HEK293 (cell line): ENCODE measurements at regions of chr1 and their contacts with region 1.

Region 1: DNA sequence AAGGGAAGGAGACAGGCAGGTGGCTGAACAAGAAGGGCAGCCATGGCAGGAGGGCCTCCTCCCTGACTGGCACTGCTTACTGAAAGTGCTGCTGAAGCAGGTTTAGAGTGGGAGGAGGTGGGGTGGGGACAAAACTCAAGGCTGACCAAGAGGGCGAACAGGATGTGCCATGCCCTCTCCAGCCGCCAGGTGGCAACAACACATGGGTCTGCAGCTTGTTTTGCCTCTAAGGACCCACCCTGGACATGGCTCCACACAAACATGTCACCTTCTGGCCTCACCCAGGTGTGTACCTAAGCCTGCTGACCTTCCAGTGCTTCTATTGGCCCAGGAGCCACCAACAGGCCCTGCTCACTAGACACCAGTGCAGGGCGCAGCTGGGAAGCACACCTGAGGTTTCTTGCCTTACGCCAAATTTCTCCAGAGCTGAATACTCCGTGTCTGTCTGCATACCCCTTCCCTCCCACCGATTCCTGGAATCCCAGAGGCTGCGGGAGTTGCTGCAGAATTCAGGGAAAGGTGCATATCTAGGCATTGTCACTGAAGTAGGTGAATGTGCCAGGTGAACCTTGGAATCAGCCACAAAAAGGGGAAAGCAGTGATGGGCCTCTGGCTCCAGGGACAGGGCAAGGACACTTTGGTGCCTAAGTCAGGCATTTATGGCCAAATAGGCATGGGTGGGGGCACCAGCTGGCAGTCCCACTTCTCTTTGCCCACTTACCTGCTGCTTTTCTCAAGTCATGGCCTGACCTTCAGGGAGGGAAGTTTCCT is 5.3 kb downstream of the PSRC1 start:
- H3K4me3 ChIP-seq: no peak overlapping the region
- H3K27ac ChIP-seq: no peak overlapping the region
- H3K4me1 ChIP-seq: peaks cover 10% of the 10 kb centered on the region
- CTCF ChIP-seq: peak; percentile 89

Region 2: DNA sequence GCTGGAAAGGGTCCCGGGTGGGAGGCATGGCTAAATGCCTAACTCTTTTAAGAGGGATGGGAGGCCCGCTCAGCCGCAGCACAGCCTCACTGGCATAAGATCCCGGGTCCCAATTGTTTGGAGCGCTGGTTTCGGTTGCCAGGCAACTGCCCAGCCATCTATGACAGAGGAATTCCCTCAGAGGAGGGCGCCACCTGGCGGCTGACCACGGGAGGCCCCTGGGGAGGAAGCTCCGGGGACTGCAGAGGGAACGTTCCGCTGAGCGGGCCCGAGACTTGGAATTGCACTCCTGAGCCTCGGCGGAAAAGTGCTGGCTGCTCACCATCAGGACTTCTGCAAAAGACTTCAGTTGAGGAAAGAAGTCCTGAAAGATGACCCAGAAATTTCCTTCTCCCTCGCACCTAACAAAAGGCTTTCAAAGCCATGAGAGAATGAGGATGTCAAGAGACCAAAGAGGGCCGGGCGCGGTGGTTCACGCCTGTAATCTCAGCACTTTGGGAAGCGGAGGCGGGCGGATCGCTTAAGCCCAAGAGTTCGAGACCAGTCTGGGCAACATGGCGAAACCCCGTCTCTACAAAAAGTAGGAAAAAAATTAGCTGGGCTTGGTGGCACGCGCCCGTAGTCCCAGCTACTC is 164.8 kb before region 1 on chr1:
- CTCF ChIA-PET with region 1: no interaction called
- POLR2A ChIA-PET with region 1: no interaction called
- H3K4me3 ChIP-seq: no peak overlapping the region
- H3K27ac ChIP-seq: no peak overlapping the region
- H3K4me1 ChIP-seq: no peaks in the 10 kb centered on the region
- CTCF ChIP-seq: peak; percentile 79

Region 3: GRCh38 chr1:109151164-109151990 is 126.2 kb before region 1 on chr1:
- CTCF ChIA-PET with region 1: no interaction called
- POLR2A ChIA-PET with region 1: no interaction called
- H3K4me3 ChIP-seq: no peak overlapping the region
- H3K27ac ChIP-seq: no peak overlapping the region
- H3K4me1 ChIP-seq: no peaks in the 10 kb centered on the region
- CTCF ChIP-seq: no peak

Region 4: DNA sequence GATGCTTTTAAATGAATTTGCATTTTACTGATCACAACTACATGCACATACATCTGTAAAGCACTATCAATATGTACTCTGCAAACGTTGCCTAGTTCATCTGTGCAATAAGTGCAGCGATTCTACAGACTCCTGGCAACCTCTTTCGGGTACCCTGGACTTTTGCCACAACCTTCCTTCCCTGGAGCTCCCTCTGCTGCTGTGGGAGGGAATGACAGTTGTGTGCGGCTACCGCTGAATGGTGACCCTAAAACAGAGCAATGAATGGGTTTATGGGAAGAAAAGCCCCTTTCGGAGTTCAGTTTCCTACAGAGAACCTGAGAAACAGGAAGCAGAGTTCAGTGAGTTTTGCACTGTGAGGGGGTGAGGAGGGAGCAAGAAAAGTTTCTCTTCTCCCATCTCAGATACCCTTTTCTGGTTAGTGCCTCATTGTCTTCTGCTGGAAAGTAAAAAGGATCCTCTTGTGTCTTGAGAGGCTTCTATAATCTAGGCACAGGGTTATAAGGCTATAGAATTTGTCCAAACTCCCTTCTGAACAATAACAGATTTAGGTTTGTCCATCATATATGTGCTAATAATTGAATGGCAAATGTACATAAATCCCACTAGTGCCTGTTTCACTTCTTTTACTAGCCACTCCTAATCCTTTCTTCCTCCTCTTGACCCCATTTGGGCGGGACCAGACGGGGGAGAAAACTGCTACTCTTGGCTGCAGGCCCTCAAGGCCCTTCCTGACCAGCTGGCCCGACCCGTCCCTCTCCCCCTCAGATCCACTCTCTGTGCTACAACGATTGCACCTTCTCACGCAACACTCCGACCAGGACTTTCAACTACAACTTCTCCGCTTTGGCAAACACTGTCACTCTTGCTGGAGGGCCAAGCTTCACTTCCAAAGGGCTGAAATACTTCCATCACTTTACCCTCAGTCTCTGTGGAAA is 83.7 kb before region 1 on chr1:
- CTCF ChIA-PET with region 1: no interaction called
- POLR2A ChIA-PET with region 1: no interaction called
- H3K4me3 ChIP-seq: no peak overlapping the region
- H3K27ac ChIP-seq: no peak overlapping the region
- H3K4me1 ChIP-seq: no peaks in the 10 kb centered on the region
- CTCF ChIP-seq: peak; percentile 48; the same call in 1 of the 2 replicates

Region 5: GRCh38 chr1:109292364-109292763 is 14.7 kb after region 1 on chr1:
- CTCF ChIA-PET with region 1: interaction called, 12 read pairs
- POLR2A ChIA-PET with region 1: interaction called, 9 read pairs
- H3K4me3 ChIP-seq: no peak overlapping the region
- H3K27ac ChIP-seq: no peak overlapping the region
- H3K4me1 ChIP-seq: no peaks in the 10 kb centered on the region
- CTCF ChIP-seq: no peak